ENCODE measurements at regions of chr1 and their contacts with region 1.

Region 1: DNA sequence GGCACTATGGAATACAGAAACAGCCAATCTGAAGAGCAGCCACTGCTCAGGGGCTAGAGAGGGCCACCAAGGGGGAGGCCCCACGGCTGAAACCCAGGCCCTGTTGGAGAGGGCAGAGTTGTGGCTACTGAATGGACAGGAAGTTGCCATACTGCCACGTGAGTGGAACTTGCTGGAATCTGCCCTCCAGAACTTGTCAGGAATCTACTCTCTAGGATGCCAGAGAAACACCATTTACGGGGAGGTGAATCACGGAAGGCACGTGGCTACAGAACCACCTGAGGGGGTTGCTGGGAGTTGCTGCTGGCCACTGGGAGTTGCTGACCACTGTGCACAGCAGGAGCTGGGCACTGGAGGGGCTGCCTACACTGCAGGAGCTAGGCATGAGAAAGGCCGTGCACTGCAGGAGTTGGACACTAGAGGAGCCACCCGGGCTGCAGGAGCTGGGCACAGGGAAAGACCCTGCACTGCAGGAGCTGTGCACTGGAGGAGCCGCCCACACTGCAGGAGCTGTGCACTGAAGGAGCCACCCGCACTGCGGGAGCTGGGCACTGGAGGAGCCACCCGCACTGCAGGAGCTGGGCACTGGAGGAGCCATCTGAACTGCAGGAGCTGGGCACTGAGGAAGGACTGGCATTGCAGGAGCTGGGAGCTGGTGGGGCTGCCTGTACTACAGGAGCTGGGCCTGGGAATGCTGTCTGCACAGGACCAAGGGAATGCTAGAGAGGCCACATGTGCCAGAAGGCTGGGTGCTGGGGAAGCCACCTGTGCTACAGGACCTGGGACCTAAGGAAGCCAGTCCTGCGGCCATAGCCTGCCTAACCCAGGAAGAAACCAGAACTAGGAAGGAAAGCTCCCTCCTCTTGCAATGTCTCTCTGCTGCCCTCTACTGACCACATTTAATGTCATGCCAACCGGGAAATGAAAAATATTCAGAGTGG is 343.4 kb downstream of the MATN1 start:
- DNase-seq: peak; percentile 38 to 43
- H3K4me3 ChIP-seq: no peak overlapping the region
- H3K27ac ChIP-seq: no peak overlapping the region
- H3K4me1 ChIP-seq: no peaks in the 10 kb centered on the region
- H3K27me3 ChIP-seq: no peaks in the 10 kb centered on the region
- CTCF ChIP-seq: peak; percentile 65 to 88 (median 75)
- POLR2A ChIP-seq: no peak

Region 2: GRCh38 chr1:29235955-29236684 is 1143.8 kb before region 1 on chr1 and contains the start of gene PTPRU:
- intact Hi-C with region 1: loop called (anchors 5 kb)
- DNase-seq: peak; percentile 77 to 79
- H3K4me3 ChIP-seq: peak within 1 kb of the TSS; percentile 21 to 69 (median 54)
- H3K27ac ChIP-seq: peak within 1 kb of the TSS in 1 of 3 donors; percentile 37
- H3K4me1 ChIP-seq: peaks cover 11 to 16% of the 10 kb centered on the region in 2 donors
- H3K27me3 ChIP-seq: no peaks in the 10 kb centered on the region
- CTCF ChIP-seq: peak in 5 of 6 experiments; percentile 27 to 99 (median 97)
- POLR2A ChIP-seq: peak in 1 of 2 donors; percentile 58
- total RNA-seq, gene PTPRU: 12.4 to 30.0 (median 17.9) TPM

Measured in thyroid gland (tissue), 4 donors.